WTC11 (cell line): ENCODE measurements at regions of chr5 and their contacts with region 1.

Region 1: GRCh38 chr5:132500931-132501630 is 10.5 kb upstream of the IRF1 start:
- DNase-seq: peak; percentile 68
- ATAC-seq: peak; percentile 20
- H3K4me3 Mint-ChIP-seq: no peak overlapping the region
- H3K27ac Mint-ChIP-seq: peak overlapping the region; percentile 72; the same call in 1 of the 2 replicates
- H3K4me1 Mint-ChIP-seq: peaks cover 10% of the 10 kb centered on the region
- H3K27me3 Mint-ChIP-seq: no peaks in the 10 kb centered on the region; the same call in 1 of the 2 replicates
- CTCF ChIP-seq: peak; percentile 86

Region 2: GRCh38 chr5:132386644-132387286 is 114.3 kb before region 1 on chr5:
- CTCF ChIA-PET with region 1: interaction called, 62 read pairs
- POLR2A ChIA-PET with region 1: no interaction called
- DNase-seq: peak; percentile 74
- ATAC-seq: peak; percentile 95
- H3K4me3 Mint-ChIP-seq: no peak overlapping the region
- H3K27ac Mint-ChIP-seq: no peak overlapping the region
- H3K4me1 Mint-ChIP-seq: peaks cover 8% of the 10 kb centered on the region
- H3K27me3 Mint-ChIP-seq: no peaks in the 10 kb centered on the region
- CTCF ChIP-seq: peak; percentile 46; the same call in 1 of the 2 replicates

Region 3: GRCh38 chr5:132419502-132420468 is 81.3 kb before region 1 on chr5:
- CTCF ChIA-PET with region 1: interaction called, 16 read pairs
- POLR2A ChIA-PET with region 1: interaction called, 3 read pairs
- DNase-seq: peak; percentile 77
- ATAC-seq: peak; percentile 92
- H3K4me3 Mint-ChIP-seq: no peak overlapping the region
- H3K27ac Mint-ChIP-seq: peak overlapping the region; percentile 67; the same call in 1 of the 2 replicates
- H3K4me1 Mint-ChIP-seq: peaks cover 20% of the 10 kb centered on the region
- H3K27me3 Mint-ChIP-seq: no peaks in the 10 kb centered on the region; the same call in 1 of the 2 replicates
- CTCF ChIP-seq: peak; percentile 86

Region 4: GRCh38 chr5:132476876-132477781 is 24.0 kb before region 1 on chr5:
- CTCF ChIA-PET with region 1: interaction called, 21 read pairs
- POLR2A ChIA-PET with region 1: interaction called, 3 read pairs
- DNase-seq: no peak
- ATAC-seq: peak; percentile 63
- H3K4me3 Mint-ChIP-seq: no peak overlapping the region
- H3K27ac Mint-ChIP-seq: no peak overlapping the region
- H3K4me1 Mint-ChIP-seq: peaks cover 10% of the 10 kb centered on the region
- H3K27me3 Mint-ChIP-seq: no peaks in the 10 kb centered on the region
- CTCF ChIP-seq: no peak

Region 5: DNA sequence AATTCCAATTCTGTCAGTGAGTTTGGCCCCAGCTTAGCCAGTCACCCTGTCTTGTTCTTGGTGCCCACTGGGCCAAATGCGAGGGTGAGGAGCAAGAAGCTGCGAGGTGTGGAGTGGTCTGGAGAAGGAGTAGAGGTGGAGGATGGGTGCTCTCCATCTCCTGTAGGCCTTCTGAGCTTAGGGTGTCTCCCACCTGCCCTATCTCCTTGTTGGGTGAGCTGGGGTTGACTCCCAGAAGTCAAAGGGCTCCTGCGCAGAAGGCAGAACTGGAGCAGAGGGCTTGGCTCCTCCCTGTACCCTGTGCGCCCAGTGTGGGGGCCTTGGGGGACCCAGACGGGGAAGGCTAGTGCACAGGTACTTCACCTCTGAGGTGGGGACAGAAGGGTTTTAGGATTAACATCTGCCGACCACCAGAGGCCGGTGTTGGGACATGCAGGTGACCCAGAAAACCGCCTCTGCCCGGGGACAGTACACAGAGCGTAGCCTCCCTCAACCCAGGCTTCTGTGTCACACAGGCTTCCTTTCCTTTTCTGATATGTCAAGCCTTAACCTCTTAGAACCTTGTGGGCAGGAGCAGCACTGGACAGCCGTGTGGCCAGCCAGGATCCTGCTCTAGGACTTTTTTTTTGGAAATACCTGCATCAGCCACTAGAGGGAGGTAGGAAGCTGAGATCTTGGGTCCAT is 25.4 kb after region 1 on chr5:
- CTCF ChIA-PET with region 1: interaction called, 25 read pairs
- POLR2A ChIA-PET with region 1: no interaction called
- DNase-seq: peak; percentile 42
- ATAC-seq: peak; percentile 86
- H3K4me3 Mint-ChIP-seq: peak overlapping the region; percentile 52
- H3K27ac Mint-ChIP-seq: no peak overlapping the region
- H3K4me1 Mint-ChIP-seq: no peaks in the 10 kb centered on the region
- H3K27me3 Mint-ChIP-seq: no peaks in the 10 kb centered on the region; the same call in 1 of the 2 replicates
- CTCF ChIP-seq: peak; percentile 89; the same call in 1 of the 2 replicates